ENCODE measurements at regions of chr3 and their contacts with region 1.

Region 1: GRCh38 chr3:32177702-32178198 is 60.7 kb upstream of the CMTM8 start:
- DNase-seq: peak; percentile 82
- H3K4me3 Mint-ChIP-seq: peak overlapping the region; percentile 51
- H3K27ac Mint-ChIP-seq: no peak overlapping the region
- H3K4me1 Mint-ChIP-seq: peaks cover 10% of the 10 kb centered on the region
- H3K27me3 Mint-ChIP-seq: no peaks in the 10 kb centered on the region

Region 2: DNA sequence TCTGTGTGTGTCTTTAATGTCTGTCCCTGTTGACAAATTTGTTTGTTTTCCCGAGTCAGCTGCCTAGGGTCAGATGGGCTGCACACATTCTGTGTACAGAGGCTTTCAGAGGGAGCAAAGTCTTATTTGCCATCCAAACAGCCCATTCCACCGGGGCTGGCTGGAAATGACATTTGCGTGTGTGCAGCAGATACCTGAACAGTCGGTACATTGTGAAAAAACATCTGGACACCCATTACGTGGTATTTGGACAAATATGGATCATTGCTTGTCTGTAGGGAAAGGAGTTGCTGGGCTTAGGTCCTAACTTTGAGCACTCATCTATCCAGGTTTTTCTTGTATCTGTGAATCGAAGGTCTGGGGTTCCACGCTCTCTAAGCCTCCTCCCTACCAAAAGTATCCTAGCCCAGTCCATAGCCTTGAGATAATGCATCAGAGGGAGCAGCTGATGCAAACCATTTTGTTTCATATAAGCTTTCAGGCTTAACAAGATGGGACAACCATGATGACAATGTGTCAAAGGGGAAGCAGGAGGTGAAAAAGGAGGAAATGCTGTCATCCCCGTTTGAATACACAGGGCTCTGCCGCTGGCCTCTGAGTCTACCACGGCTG is 38.5 kb after region 1 on chr3:
- CTCF ChIA-PET with region 1: no interaction called
- intact Hi-C with region 1: no loop called
- DNase-seq: no peak
- H3K4me3 Mint-ChIP-seq: no peak overlapping the region
- H3K27ac Mint-ChIP-seq: no peak overlapping the region
- H3K4me1 Mint-ChIP-seq: no peaks in the 10 kb centered on the region
- H3K27me3 Mint-ChIP-seq: no peaks in the 10 kb centered on the region

Region 3: DNA sequence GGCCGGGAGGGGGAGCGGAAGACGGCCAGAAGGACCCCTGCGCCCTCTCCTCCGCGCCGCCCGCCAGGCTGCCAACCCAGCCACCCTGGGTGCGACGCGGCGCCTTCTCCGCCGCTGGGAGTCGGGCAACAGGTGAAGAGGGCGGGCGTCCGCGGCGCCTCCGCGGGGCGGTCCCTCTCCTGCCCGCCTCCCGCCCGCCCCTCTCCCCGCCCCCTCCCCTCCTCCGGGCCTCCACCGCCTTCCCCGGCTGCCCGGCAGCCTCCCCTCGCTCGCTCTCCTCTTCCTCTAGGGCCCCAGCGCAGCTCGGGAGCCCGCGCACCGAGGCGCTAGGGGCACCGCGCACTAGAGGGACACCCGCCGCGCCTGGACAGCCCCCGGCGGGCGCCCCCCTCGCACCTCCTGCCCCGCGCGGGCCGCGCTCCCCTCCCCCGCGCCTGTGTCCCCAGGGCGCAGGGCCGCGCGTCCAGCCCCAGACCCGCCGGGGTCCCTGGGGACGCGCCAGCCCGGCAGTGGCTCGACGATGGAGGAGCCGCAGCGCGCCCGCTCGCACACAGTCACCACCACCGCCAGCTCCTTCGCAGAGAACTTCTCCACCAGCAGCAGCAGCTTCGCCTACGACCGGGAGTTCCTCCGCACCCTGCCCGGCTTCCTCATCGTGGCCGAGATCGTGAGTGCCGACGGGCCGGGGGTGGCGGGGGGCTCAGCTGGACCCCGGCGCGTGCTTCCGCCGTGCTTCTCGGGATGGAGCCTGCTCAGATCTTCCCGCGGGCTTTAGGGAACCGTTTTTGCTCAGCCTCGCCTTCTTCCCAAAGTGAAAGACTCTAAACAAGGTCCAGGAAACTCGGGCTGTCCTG is 60.9 kb after region 1 on chr3 and contains the start of gene CMTM8:
- CTCF ChIA-PET with region 1: interaction called, 37 read pairs
- intact Hi-C with region 1: loop called (anchors 1 kb)
- DNase-seq: peak; percentile 70
- H3K4me3 Mint-ChIP-seq: peak within 1 kb of the TSS; percentile 82
- H3K27ac Mint-ChIP-seq: no peak within 1 kb of the TSS
- H3K4me1 Mint-ChIP-seq: peaks cover 32% of the 10 kb centered on the region
- H3K27me3 Mint-ChIP-seq: peaks cover 2% of the 10 kb centered on the region
- total RNA-seq, gene CMTM8: 16.0 to 19.1 TPM

Region 4: GRCh38 chr3:32325957-32326356 is 148.2 kb after region 1 on chr3:
- CTCF ChIA-PET with region 1: interaction called, 11 read pairs
- intact Hi-C with region 1: no loop called
- DNase-seq: no peak
- H3K4me3 Mint-ChIP-seq: no peak overlapping the region
- H3K27ac Mint-ChIP-seq: no peak overlapping the region
- H3K4me1 Mint-ChIP-seq: peaks cover 9% of the 10 kb centered on the region
- H3K27me3 Mint-ChIP-seq: no peaks in the 10 kb centered on the region

Region 5: GRCh38 chr3:32374788-32375595 is 197.2 kb after region 1 on chr3:
- CTCF ChIA-PET with region 1: interaction called, 9 read pairs
- intact Hi-C with region 1: loop called (anchors 1 kb)
- DNase-seq: peak; percentile 88
- H3K4me3 Mint-ChIP-seq: no peak overlapping the region
- H3K27ac Mint-ChIP-seq: peak overlapping the region; percentile 69
- H3K4me1 Mint-ChIP-seq: peaks cover 35% of the 10 kb centered on the region
- H3K27me3 Mint-ChIP-seq: no peaks in the 10 kb centered on the region

Region 6: GRCh38 chr3:32502118-32502945 is 324.6 kb after region 1 on chr3 and contains the start of gene CMTM6:
- CTCF ChIA-PET with region 1: no interaction called
- intact Hi-C with region 1: loop called (anchors 1 kb)
- DNase-seq: peak; percentile 81
- H3K4me3 Mint-ChIP-seq: peak within 1 kb of the TSS; percentile 97
- H3K27ac Mint-ChIP-seq: peak within 1 kb of the TSS; percentile 89
- H3K4me1 Mint-ChIP-seq: peaks cover 27% of the 10 kb centered on the region
- H3K27me3 Mint-ChIP-seq: no peaks in the 10 kb centered on the region
- total RNA-seq, gene CMTM6: 43.7 to 44.3 TPM

Region 7: DNA sequence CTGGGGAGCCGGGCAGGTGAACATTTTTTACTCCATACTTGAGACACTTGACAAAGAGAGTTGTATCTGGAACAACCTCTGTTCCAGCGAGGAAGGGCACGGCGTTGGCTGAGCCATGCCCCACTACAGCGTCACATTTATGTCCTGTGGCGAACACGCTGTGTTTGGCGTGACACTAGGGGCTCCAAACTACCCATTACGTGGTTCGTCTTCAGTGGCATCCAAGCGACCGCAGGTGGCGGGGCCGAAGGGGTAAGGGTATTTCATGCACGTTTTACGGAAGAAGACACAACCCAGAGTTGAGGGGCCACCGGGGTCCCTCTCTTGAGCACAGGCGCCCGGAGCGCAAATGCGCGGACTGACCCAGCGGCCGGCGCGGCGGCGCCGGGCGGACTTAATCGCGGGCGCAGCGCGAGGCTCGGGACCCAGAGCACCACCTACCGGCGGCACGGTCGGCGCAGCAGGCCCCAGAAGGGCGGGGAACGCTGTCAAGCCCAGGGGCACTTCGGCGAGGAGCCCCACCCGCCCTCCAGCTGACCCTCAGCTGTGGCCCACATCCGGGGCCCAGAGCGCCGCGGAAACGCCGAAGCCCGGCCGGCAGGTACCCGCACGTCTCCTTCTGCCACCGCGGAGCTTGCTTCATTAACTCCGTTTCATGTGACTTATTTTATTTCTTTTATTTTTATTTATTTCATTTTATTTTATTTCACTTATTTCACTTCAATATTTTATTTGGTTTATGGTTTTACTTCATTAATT is 603.6 kb after region 1 on chr3:
- CTCF ChIA-PET with region 1: no interaction called
- intact Hi-C with region 1: loop called (anchors 5 kb)
- DNase-seq: peak; percentile 74
- H3K4me3 Mint-ChIP-seq: peak overlapping the region; percentile 77
- H3K27ac Mint-ChIP-seq: no peak overlapping the region
- H3K4me1 Mint-ChIP-seq: peaks cover 2% of the 10 kb centered on the region
- H3K27me3 Mint-ChIP-seq: peaks cover 18% of the 10 kb centered on the region

Measured in activated naive CD4-positive, alpha-beta T cell treated with anti-CD3 and anti-CD28 coated beads for 36 hours (primary cell).